ENCODE measurements at regions of chr5 and their contacts with region 1.

Region 1: DNA sequence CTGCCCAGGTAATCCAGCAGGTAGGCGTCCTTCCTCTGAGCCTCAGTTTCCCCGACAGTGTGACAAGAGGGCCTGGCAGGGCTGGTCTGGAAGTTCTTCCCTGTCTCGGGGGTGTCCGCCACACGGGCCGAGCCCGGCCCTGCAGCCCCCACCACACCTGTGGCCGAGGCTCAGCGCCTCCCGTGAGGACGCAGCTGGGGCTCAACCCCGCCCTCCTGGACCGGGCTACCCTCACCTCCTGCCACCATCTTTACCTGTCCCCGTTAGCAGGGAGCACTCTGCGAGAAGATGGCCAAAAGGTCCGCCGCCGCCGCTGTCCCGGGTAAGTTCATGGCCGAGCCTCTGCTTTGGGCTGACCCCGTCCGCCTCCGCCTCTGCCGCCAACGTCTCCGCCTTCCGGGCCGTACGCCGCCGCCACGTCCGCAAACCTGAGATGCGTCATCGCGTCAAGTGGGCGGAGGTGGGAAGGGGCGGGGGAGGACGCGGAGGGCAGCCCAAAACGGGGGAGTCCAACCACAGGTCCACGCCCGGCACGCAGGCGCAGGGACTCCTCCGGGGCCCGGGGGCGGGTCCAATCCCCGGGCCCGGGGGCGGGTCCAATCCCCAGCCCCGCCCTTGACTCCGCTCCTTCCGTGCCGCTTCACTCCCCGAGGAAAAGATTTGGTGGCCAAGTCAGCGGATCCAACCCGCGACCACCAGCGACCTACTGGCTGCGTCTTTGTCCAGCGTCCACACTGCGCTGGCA is at the start of gene LYSMD3:
- DNase-seq: peak; percentile 96 to 98 (median 97)
- H3K4me3 ChIP-seq: peak within 1 kb of the TSS; percentile 94
- H3K4me3 Mint-ChIP-seq: peak within 1 kb of the TSS; percentile 97 to 100 (median 99)
- H3K27ac ChIP-seq: peak within 1 kb of the TSS; percentile 98
- H3K27ac Mint-ChIP-seq: peak within 1 kb of the TSS; percentile 92 to 100 (median 98)
- H3K4me1 ChIP-seq: peaks cover 23% of the 10 kb centered on the region
- H3K4me1 Mint-ChIP-seq: peaks cover 32 to 45% (median 40%) of the 10 kb centered on the region in 3 donors
- H3K27me3 ChIP-seq: no peaks in the 10 kb centered on the region
- H3K27me3 Mint-ChIP-seq: peaks cover 6 to 21% of the 10 kb centered on the region in 2 donors
- total RNA-seq, gene LYSMD3: 17.0 TPM

Region 2: GRCh38 chr5:90409318-90410177 is 119.8 kb before region 1 on chr5 and contains the start of gene CETN3:
- CTCF ChIA-PET with region 1: interaction called, 12 read pairs
- POLR2A ChIA-PET with region 1: interaction called, 12 read pairs
- DNase-seq: peak; percentile 85 to 94 (median 89)
- H3K4me3 ChIP-seq: peak within 1 kb of the TSS; percentile 87
- H3K4me3 Mint-ChIP-seq: no peak within 1 kb of the TSS
- H3K27ac ChIP-seq: peak within 1 kb of the TSS; percentile 95
- H3K27ac Mint-ChIP-seq: no peak within 1 kb of the TSS
- H3K4me1 ChIP-seq: peaks cover 13% of the 10 kb centered on the region
- H3K4me1 Mint-ChIP-seq: peaks cover 14 to 21% (median 19%) of the 10 kb centered on the region in 3 donors
- H3K27me3 ChIP-seq: no peaks in the 10 kb centered on the region
- H3K27me3 Mint-ChIP-seq: no peaks in the 10 kb centered on the region
- total RNA-seq, gene CETN3: 41.0 to 41.6 TPM

Region 3: DNA sequence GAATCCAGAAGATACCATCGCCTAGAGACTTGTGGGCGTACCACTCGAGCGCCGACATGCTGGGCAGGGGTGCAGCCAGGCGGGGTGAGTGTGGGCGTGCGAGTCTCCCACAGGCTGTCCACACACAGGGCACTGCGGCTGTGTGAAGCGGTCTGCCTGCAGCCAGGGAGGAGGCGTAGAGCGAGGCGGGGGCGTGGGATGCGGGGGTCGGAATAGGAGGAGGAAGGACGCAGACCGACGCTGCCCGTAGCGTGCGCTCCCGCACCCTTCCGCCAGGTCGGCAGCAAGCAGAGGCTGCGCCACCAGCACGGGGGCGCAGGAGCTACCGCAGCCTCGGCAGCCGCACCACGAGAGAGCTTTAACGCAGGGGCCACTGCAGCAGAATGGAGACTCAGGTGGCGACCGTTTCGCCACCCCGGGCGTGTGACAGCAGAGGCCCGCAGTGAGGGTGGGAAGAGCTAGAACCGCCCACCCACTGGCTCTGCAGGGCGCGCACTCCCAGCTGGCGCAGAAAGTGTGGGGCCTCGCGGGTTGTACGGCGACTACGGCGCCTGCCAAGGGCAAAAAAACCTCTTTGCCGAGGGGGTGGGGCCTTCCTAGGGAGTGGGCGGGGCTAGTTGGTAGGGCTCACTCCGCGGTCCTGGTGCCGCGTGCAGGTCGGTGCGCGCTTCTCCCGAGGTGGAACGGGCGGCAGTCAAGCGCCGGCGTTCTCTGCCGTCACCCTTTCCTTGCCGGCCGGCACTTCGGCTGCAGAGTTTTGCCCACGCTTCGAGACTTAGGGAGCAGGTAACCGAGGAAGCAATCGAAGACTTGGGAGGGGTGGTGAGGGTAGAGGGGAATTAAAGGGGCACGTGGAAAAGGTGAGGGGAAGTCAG is 54.9 kb before region 1 on chr5 and contains the starts of genes MBLAC2 and POLR3G:
- CTCF ChIA-PET with region 1: interaction called, 19 read pairs
- POLR2A ChIA-PET with region 1: interaction called, 7 read pairs
- DNase-seq: peak; percentile 88 to 94 (median 91)
- H3K4me3 ChIP-seq: peak within 1 kb of the TSS; percentile 87
- H3K4me3 Mint-ChIP-seq: peak within 1 kb of the TSS; percentile 95 to 100 (median 98)
- H3K27ac ChIP-seq: peak within 1 kb of the TSS; percentile 80
- H3K27ac Mint-ChIP-seq: peak within 1 kb of the TSS; percentile 90 to 98 (median 95)
- H3K4me1 ChIP-seq: peaks cover 15% of the 10 kb centered on the region
- H3K4me1 Mint-ChIP-seq: peaks cover 35 to 53% (median 51%) of the 10 kb centered on the region in 3 donors
- H3K27me3 ChIP-seq: no peaks in the 10 kb centered on the region
- H3K27me3 Mint-ChIP-seq: no peaks in the 10 kb centered on the region
- total RNA-seq, gene MBLAC2: 6.3 to 6.7 TPM
- total RNA-seq, gene POLR3G: 14.7 to 15.1 TPM

Measured in CD8-positive, alpha-beta memory T cell (primary cell).